ENCODE measurements at regions of chr1 and their contacts with region 1.

Region 1: DNA sequence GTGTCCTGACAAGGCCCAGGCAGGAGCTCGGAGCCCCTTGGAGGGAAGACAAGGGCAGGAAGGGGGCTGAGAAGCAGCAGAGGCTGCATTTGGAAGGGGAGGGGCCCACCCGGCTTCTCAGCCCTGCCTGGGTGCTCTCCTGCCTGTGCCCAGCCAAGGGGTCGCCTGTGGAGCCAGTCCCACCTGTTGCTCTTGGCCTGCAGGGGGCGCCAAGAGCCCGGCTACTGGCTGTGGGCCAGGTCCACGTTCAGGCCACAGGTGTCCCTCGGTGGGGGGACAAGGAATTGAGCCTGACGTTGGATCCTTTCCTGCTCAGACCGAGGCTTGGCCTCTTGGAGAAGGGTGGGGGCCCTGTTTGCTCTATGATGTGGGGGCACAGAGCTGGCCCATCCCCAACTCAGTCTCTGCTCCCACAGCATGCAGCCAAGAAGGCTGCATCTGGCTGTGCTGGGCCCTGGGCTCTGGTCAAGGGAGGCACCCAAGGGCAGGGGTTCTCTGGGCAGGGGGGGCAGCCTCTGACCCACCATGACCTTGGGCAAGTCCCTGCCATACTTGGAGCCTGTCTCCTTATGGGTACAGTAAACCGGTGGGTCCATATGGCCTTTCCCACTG is 10.9 kb downstream of the WNT4 start:
- DNase-seq: peak; percentile 30
- ATAC-seq: peak; percentile 85
- H3K4me3 ChIP-seq: no peak overlapping the region
- H3K27ac ChIP-seq: no peak overlapping the region
- H3K4me1 ChIP-seq: no peaks in the 10 kb centered on the region
- H3K27me3 ChIP-seq: peaks cover 11 to 43% of the 10 kb centered on the region in 2 experiments
- CTCF ChIP-seq: peak; percentile 97
- EP300 ChIP-seq: no peak
- POLR2A ChIP-seq: no peak
- RAD21 ChIP-seq: peak; percentile 92

Region 2: DNA sequence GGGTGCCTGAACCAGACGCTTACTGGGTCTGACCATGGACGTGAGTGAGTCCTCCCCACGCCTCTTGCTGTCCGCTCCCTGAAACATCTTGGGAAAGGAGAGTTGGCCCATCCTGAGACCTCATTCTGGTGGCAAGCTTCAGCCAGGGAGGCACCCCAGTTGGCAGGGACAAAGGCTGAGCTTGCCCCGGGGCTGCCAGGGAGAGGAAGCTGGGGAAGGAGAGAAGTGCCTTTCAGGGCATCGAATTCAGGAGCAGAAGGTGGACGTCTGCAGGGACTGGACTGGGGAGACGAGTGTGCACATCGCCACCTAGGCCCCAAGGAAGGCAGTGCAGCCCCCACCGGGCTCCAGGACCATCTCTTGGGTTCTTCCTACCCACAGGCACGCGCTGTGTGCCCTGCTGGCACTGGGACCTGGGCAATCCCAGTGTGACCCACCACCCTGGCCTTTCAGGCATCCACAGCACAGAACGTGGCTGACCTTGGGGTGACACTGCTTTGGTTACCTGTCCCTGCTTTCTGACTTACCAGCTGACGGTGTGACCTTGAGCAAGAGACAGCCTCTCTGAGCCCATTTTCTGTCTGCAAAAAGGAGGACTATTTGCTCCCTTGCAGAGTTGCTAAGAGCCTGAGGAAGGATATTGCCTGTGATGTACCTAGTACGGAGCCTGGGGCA is 143.9 kb after region 1 on chr1:
- CTCF ChIA-PET with region 1: interaction called, 3 read pairs
- POLR2A ChIA-PET with region 1: no interaction called
- in situ Hi-C with region 1: no loop called
- intact Hi-C with region 1: loop called (anchors 10 kb)
- DNase-seq: no peak
- ATAC-seq: peak; percentile 91
- H3K4me3 ChIP-seq: no peak overlapping the region
- H3K27ac ChIP-seq: no peak overlapping the region
- H3K4me1 ChIP-seq: no peaks in the 10 kb centered on the region
- H3K27me3 ChIP-seq: peaks cover 3 to 26% of the 10 kb centered on the region in 2 experiments; a peak in 4 of 5 replicates
- CTCF ChIP-seq: peak; percentile 74
- EP300 ChIP-seq: no peak
- POLR2A ChIP-seq: no peak
- RAD21 ChIP-seq: peak; percentile 36; the same call in 1 of the 2 replicates

Region 3: GRCh38 chr1:22641906-22642636 is 510.1 kb after region 1 on chr1:
- CTCF ChIA-PET with region 1: no interaction called
- POLR2A ChIA-PET with region 1: no interaction called
- in situ Hi-C with region 1: loop called (anchors 10 kb)
- intact Hi-C with region 1: no loop called
- DNase-seq: peak; percentile 16
- ATAC-seq: peak; percentile 87
- H3K4me3 ChIP-seq: no peak overlapping the region
- H3K27ac ChIP-seq: no peak overlapping the region
- H3K4me1 ChIP-seq: no peaks in the 10 kb centered on the region
- H3K27me3 ChIP-seq: peaks cover 6 to 22% of the 10 kb centered on the region in 2 experiments; a peak in 3 of 5 replicates
- CTCF ChIP-seq: peak; percentile 95
- EP300 ChIP-seq: no peak
- POLR2A ChIP-seq: no peak
- RAD21 ChIP-seq: peak; percentile 92